HepG2 (cell line): ENCODE measurements at regions of chr6 and their contacts with region 1.

Region 1: GRCh38 chr6:32413427-32414047 is 6.6 kb upstream of the BTNL2 start:
- DNase-seq: peak; percentile 50
- ATAC-seq: peak; percentile 88
- H3K4me3 ChIP-seq: no peak overlapping the region
- H3K27ac ChIP-seq: no peak overlapping the region
- H3K4me1 ChIP-seq: no peaks in the 10 kb centered on the region
- H3K27me3 ChIP-seq: peaks cover 5 to 33% of the 10 kb centered on the region in 2 experiments; a peak in 4 of 5 replicates
- CTCF ChIP-seq: peak; percentile 93
- EP300 ChIP-seq: no peak
- POLR2A ChIP-seq: no peak
- RAD21 ChIP-seq: peak; percentile 85

Region 2: GRCh38 chr6:32244946-32245398 is 168.6 kb before region 1 on chr6:
- CTCF ChIA-PET with region 1: interaction called, 10 read pairs
- POLR2A ChIA-PET with region 1: no interaction called
- in situ Hi-C with region 1: no loop called
- intact Hi-C with region 1: no loop called
- DNase-seq: peak; percentile 43
- ATAC-seq: peak; percentile 84
- H3K4me3 ChIP-seq: no peak overlapping the region; a peak in 1 of 6 replicates
- H3K27ac ChIP-seq: no peak overlapping the region
- H3K4me1 ChIP-seq: no peaks in the 10 kb centered on the region
- H3K27me3 ChIP-seq: peaks cover 0 to 23% of the 10 kb centered on the region in 2 experiments; a peak in 3 of 5 replicates
- CTCF ChIP-seq: peak; percentile 92
- EP300 ChIP-seq: no peak
- POLR2A ChIP-seq: no peak
- RAD21 ChIP-seq: peak; percentile 70

Region 3: GRCh38 chr6:32477808-32478207 is 64.3 kb after region 1 on chr6:
- CTCF ChIA-PET with region 1: no interaction called
- POLR2A ChIA-PET with region 1: no interaction called
- in situ Hi-C with region 1: no loop called
- intact Hi-C with region 1: loop called (anchors 5 kb)
- DNase-seq: peak; percentile 13
- ATAC-seq: no peak
- H3K4me3 ChIP-seq: no peak overlapping the region
- H3K27ac ChIP-seq: no peak overlapping the region
- H3K4me1 ChIP-seq: no peaks in the 10 kb centered on the region
- H3K27me3 ChIP-seq: peaks cover 0 to 5% of the 10 kb centered on the region in 2 experiments; a peak in 1 of 5 replicates
- CTCF ChIP-seq: no peak
- EP300 ChIP-seq: no peak
- POLR2A ChIP-seq: no peak
- RAD21 ChIP-seq: no peak

Region 4: GRCh38 chr6:32700391-32701040 is 287.0 kb after region 1 on chr6:
- CTCF ChIA-PET with region 1: interaction called, 36 read pairs
- POLR2A ChIA-PET with region 1: no interaction called
- in situ Hi-C with region 1: loop called (anchors 5 kb)
- intact Hi-C with region 1: loop called (anchors 1 kb)
- DNase-seq: peak; percentile 56
- ATAC-seq: peak; percentile 88
- H3K4me3 ChIP-seq: no peak overlapping the region
- H3K27ac ChIP-seq: no peak overlapping the region
- H3K4me1 ChIP-seq: no peaks in the 10 kb centered on the region
- H3K27me3 ChIP-seq: no peaks in the 10 kb centered on the region; a peak in 1 of 5 replicates
- CTCF ChIP-seq: peak; percentile 77
- EP300 ChIP-seq: no peak
- POLR2A ChIP-seq: no peak
- RAD21 ChIP-seq: peak; percentile 36; the same call in 1 of the 2 replicates

Region 5: DNA sequence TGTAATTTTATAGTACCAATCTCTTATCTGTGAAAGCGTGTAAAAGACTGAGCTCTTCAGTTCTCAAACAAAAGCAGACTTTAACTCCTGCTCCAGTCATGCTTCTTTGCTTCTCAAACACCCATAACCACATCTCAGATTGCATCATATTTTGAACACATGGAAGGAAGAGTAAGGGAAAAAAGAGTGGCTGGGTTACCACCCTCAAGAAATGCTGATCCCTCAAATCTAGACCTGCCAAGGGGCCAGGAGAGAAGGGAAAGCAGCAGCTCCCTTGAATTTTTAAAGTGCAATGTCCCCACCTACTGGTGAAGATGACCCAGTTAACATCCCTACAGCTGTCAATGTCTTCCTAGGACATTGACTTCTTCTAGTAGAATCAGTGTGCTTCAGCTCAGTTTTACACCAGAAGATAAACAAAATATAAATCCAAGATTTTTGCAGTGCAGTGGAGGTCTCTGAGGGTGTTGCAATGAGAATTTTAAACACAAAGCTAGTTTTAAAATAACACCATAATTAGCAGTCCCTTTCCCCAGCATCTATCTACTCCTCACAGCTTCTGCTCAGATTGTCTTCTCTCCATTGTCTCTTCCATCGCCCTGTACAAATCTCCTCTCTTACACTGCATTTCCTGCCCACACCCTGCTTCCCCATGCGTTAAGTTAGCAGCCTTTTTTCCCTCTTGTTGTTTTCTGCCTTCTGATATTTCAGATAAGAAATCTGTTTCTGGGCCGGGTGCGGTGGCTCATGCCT is 372.4 kb after region 1 on chr6:
- CTCF ChIA-PET with region 1: interaction called, 14 read pairs
- POLR2A ChIA-PET with region 1: no interaction called
- in situ Hi-C with region 1: no loop called
- intact Hi-C with region 1: loop called (anchors 1 kb)
- DNase-seq: peak; percentile 44
- ATAC-seq: peak; percentile 86
- H3K4me3 ChIP-seq: no peak overlapping the region
- H3K27ac ChIP-seq: no peak overlapping the region
- H3K4me1 ChIP-seq: peaks cover 7% of the 10 kb centered on the region; the same call in 1 of the 2 replicates
- H3K27me3 ChIP-seq: no peaks in the 10 kb centered on the region; a peak in 1 of 5 replicates
- CTCF ChIP-seq: peak; percentile 80
- EP300 ChIP-seq: no peak
- POLR2A ChIP-seq: no peak
- RAD21 ChIP-seq: peak; percentile 39; the same call in 1 of the 2 replicates

Region 6: GRCh38 chr6:32796848-32797776 is 383.6 kb after region 1 on chr6:
- CTCF ChIA-PET with region 1: interaction called, 18 read pairs
- POLR2A ChIA-PET with region 1: no interaction called
- in situ Hi-C with region 1: loop called (anchors 5 kb)
- intact Hi-C with region 1: loop called (anchors 1 kb)
- DNase-seq: peak; percentile 57
- ATAC-seq: peak; percentile 77
- H3K4me3 ChIP-seq: peak overlapping the region in 2 of 3 experiments; percentile 23 to 48; a peak in 3 of 6 replicates
- H3K27ac ChIP-seq: no peak overlapping the region
- H3K4me1 ChIP-seq: peaks cover 15% of the 10 kb centered on the region
- H3K27me3 ChIP-seq: peaks cover 0 to 40% of the 10 kb centered on the region in 2 experiments; a peak in 3 of 5 replicates
- CTCF ChIP-seq: peak; percentile 88
- EP300 ChIP-seq: no peak
- POLR2A ChIP-seq: no peak
- RAD21 ChIP-seq: peak; percentile 76